Activated CD4-positive, alpha-beta memory T cell treated with anti-CD3 and anti-CD28 coated beads, Interleukin-2, amount 10 ng/mL, durations not matched to agents 7 days and 5 days (primary cell): ENCODE measurements at regions of chr6 and their contacts with region 1.

Region 1: GRCh38 chr6:125191916-125192609 is 38.5 kb downstream of the TPD52L1 start:
- DNase-seq: peak; percentile 69
- H3K4me3 Mint-ChIP-seq: no peak overlapping the region
- H3K27ac Mint-ChIP-seq: no peak overlapping the region
- H3K4me1 Mint-ChIP-seq: peaks cover 6% of the 10 kb centered on the region
- H3K27me3 Mint-ChIP-seq: peaks cover 1% of the 10 kb centered on the region

Region 2: GRCh38 chr6:125153391-125154117 is 38.5 kb before region 1 on chr6 and contains the start of gene TPD52L1:
- CTCF ChIA-PET with region 1: interaction called, 16 read pairs
- POLR2A ChIA-PET with region 1: no interaction called
- DNase-seq: peak; percentile 65
- H3K4me3 Mint-ChIP-seq: peak within 1 kb of the TSS; percentile 55
- H3K27ac Mint-ChIP-seq: no peak within 1 kb of the TSS
- H3K4me1 Mint-ChIP-seq: peaks cover 6% of the 10 kb centered on the region
- H3K27me3 Mint-ChIP-seq: peaks cover 45% of the 10 kb centered on the region
- total RNA-seq, gene TPD52L1: not detected

Region 3: DNA sequence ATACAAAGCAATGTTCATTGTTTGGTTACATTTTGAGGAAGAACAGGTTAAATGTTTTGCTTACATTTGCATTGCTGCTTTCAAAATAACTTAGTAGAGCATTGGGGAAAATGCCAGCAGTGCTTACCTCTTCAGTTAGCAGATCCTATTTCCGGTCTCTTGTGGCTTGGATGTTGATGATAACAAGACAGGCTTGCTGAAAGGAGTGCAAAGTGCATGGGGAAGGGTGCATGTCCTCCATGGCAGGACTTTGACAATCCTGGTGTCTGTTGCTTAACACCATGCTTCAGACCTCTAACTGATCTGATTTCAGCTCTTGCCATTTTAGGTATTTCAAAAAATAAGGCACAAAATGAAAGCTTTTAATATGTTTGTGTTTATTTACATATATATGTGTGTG is 17.4 kb before region 1 on chr6:
- CTCF ChIA-PET with region 1: interaction called, 12 read pairs
- POLR2A ChIA-PET with region 1: no interaction called
- DNase-seq: no peak
- H3K4me3 Mint-ChIP-seq: no peak overlapping the region
- H3K27ac Mint-ChIP-seq: no peak overlapping the region
- H3K4me1 Mint-ChIP-seq: no peaks in the 10 kb centered on the region
- H3K27me3 Mint-ChIP-seq: peaks cover 13% of the 10 kb centered on the region